Mammary epithelial cell (primary cell): ENCODE measurements at regions of chr19 and their contacts with region 1.

Region 1: GRCh38 chr19:46753420-46754155 is 7.3 kb upstream of the STRN4 start:
- DNase-seq: peak; percentile 29
- H3K4me3 ChIP-seq: no peak overlapping the region
- H3K27ac ChIP-seq: no peak overlapping the region
- H3K4me1 ChIP-seq: peaks cover 3% of the 10 kb centered on the region
- H3K27me3 ChIP-seq: no peaks in the 10 kb centered on the region
- CTCF ChIP-seq: peak; percentile 51 to 55

Region 2: GRCh38 chr19:46728693-46729676 is 24.6 kb before region 1 on chr19:
- CTCF ChIA-PET with region 1: no interaction called
- dilution Hi-C with region 1: no loop called
- in situ Hi-C with region 1: no loop called
- intact Hi-C with region 1: no loop called
- DNase-seq: no peak
- H3K4me3 ChIP-seq: no peak overlapping the region
- H3K27ac ChIP-seq: no peak overlapping the region
- H3K4me1 ChIP-seq: peaks cover 26% of the 10 kb centered on the region
- H3K27me3 ChIP-seq: no peaks in the 10 kb centered on the region
- CTCF ChIP-seq: peak; percentile 72 to 93

Region 3: DNA sequence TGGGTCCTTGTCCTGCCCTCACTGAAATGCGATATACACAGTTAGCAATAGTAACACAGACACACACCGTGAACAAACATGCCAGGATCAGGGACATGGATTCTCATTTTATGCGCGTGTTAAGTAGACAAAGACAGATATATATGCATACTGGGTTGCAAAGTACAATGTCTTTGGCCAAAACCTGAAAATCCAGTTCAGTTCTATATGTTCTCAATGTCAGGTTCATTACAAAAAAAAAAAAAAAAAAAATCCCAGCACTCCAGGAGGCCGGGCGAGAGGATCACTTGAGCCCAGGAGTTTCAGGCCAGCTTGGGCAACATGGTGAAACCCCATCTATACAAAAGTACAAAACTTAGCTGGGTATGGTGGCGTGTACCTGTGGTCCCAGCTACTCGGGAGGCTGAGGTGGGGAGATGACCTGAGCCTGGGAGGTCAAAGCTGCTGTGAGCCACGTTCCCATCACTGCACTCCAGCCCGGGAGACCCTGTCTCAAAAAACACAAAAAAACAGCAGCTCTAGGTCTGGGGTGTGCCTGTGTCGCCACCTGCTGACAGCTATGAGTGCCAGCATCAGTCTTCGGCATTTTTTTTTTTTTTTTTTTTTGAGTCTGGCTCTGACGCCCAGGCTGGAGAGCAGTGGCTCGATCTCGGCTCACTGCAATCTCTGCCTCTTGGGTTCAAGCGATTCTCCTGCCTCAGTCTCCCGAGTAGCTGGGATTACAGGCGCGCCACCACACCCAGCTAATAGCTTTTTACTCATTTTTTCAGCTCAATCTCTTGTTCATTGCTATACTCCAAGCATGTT is 86.8 kb after region 1 on chr19:
- CTCF ChIA-PET with region 1: interaction called, 3 read pairs
- dilution Hi-C with region 1: no loop called
- in situ Hi-C with region 1: loop called (anchors 5 kb)
- intact Hi-C with region 1: loop called (anchors 1 kb)
- DNase-seq: peak; percentile 49
- H3K4me3 ChIP-seq: no peak overlapping the region
- H3K27ac ChIP-seq: no peak overlapping the region
- H3K4me1 ChIP-seq: peaks cover 10% of the 10 kb centered on the region
- H3K27me3 ChIP-seq: no peaks in the 10 kb centered on the region
- CTCF ChIP-seq: peak; percentile 77 to 89

Region 4: GRCh38 chr19:46990991-46991676 is 237.5 kb after region 1 on chr19:
- CTCF ChIA-PET with region 1: no interaction called
- dilution Hi-C with region 1: no loop called
- in situ Hi-C with region 1: loop called in 1 of 2 experiments (anchors 25 kb)
- intact Hi-C with region 1: loop called (anchors 1 kb)
- DNase-seq: peak; percentile 60
- H3K4me3 ChIP-seq: no peak overlapping the region
- H3K27ac ChIP-seq: no peak overlapping the region
- H3K4me1 ChIP-seq: no peaks in the 10 kb centered on the region
- H3K27me3 ChIP-seq: no peaks in the 10 kb centered on the region
- CTCF ChIP-seq: peak; percentile 77 to 89